Activated naive CD4-positive, alpha-beta T cell treated with anti-CD3 and anti-CD28 coated beads for 36 hours (primary cell): ENCODE measurements at regions of chr1 and their contacts with region 1.

Region 1: DNA sequence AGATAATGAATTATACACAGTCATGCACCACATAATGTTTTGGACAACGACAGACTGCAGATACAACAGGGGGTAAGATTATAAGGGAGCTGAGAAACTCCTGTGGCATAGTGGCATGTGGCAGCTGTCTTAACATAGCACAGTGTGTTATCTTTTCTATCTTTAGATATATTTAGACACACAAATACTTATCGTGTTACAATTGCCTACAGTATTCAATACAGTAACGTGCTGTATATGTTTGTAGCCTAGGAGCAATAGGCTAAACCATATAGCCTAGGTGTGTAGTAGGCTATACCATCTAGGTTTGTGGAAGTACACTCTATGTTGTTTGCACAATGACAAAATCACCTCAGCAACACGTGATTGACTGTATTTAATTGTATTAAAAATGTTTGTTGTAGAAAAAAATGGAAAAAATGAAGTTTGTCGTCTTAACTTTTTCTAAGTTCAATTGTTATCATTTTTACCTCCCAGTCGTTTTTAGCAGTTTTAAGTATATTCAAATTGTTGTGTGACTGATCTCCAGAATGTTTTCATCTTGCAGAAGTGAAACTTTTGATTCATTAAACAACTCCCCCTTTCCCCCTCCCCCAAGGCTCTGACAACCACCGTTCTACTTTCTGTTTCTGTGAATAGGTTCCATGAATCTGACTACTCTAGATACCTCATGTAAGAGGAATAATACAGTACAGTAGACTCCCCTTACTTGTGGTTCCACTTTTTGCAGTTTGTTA is 351.0 kb upstream of the B3GALT2 start:
- DNase-seq: peak; percentile 91
- H3K4me3 Mint-ChIP-seq: no peak overlapping the region
- H3K27ac Mint-ChIP-seq: peak overlapping the region; percentile 26
- H3K4me1 Mint-ChIP-seq: peaks cover 43% of the 10 kb centered on the region
- H3K27me3 Mint-ChIP-seq: no peaks in the 10 kb centered on the region

Region 2: GRCh38 chr1:192639607-192640368 is 897.6 kb before region 1 on chr1:
- CTCF ChIA-PET with region 1: no interaction called
- intact Hi-C with region 1: loop called (anchors 1 kb)
- DNase-seq: peak; percentile 12
- H3K4me3 Mint-ChIP-seq: no peak overlapping the region
- H3K27ac Mint-ChIP-seq: no peak overlapping the region
- H3K4me1 Mint-ChIP-seq: peaks cover 18% of the 10 kb centered on the region
- H3K27me3 Mint-ChIP-seq: peaks cover 7% of the 10 kb centered on the region

Region 3: GRCh38 chr1:193406901-193407300 is 130.5 kb before region 1 on chr1:
- CTCF ChIA-PET with region 1: no interaction called
- intact Hi-C with region 1: loop called (anchors 1 kb)
- DNase-seq: no peak
- H3K4me3 Mint-ChIP-seq: no peak overlapping the region
- H3K27ac Mint-ChIP-seq: no peak overlapping the region
- H3K4me1 Mint-ChIP-seq: peaks cover 26% of the 10 kb centered on the region
- H3K27me3 Mint-ChIP-seq: no peaks in the 10 kb centered on the region

Region 4: GRCh38 chr1:193479187-193479586 is 58.2 kb before region 1 on chr1:
- CTCF ChIA-PET with region 1: no interaction called
- intact Hi-C with region 1: loop called (anchors 2 kb)
- DNase-seq: peak; percentile 83
- H3K4me3 Mint-ChIP-seq: no peak overlapping the region
- H3K27ac Mint-ChIP-seq: peak overlapping the region; percentile 68
- H3K4me1 Mint-ChIP-seq: peaks cover 47% of the 10 kb centered on the region
- H3K27me3 Mint-ChIP-seq: no peaks in the 10 kb centered on the region

Region 5: DNA sequence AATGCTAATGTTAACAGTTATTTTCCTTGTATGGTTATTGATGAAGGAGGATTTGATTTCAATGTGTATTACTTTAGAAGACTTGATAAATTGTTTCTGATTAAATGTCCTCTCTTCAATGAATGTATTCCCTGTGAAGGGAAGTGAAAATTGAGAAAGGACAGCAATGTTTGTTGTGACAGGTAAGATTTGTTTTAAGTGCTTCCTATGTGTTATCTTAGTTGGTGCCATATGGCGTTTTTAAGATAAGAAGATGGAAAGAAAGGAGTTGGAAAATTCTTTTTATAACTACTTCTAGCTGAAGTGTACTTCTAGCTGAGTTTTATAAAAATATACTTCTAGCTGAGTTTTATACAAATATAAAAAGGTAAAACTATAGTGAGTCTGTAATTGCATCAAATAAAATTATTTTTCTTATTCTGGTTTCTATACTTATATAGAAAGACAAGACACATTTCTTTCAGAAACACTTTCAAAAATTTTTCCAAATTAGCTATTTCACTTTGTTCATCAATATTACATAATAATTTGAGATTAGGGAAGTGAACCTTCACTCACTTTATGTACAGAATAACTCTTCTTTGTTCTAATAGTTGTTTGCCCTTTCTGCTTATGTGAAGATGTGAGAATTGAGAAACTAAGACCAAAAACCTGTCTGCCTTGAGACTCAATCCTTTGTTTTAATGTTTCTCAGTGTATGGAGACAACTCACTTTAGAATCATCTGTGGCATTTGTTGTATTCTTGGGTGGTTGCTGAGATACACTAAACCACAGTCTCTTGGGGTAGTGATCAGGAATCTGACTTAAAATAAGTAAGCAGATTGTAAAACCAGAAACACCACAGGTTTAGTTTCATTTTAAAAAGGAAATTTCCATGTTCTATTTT is 31.9 kb after region 1 on chr1:
- CTCF ChIA-PET with region 1: no interaction called
- intact Hi-C with region 1: loop called (anchors 1 kb)
- DNase-seq: peak; percentile 11
- H3K4me3 Mint-ChIP-seq: no peak overlapping the region
- H3K27ac Mint-ChIP-seq: peak overlapping the region; percentile 22
- H3K4me1 Mint-ChIP-seq: peaks cover 26% of the 10 kb centered on the region
- H3K27me3 Mint-ChIP-seq: no peaks in the 10 kb centered on the region

Region 6: GRCh38 chr1:194289569-194290266 is 752.3 kb after region 1 on chr1:
- CTCF ChIA-PET with region 1: no interaction called
- intact Hi-C with region 1: loop called (anchors 1 kb)
- DNase-seq: peak; percentile 81
- H3K4me3 Mint-ChIP-seq: peak overlapping the region; percentile 54
- H3K27ac Mint-ChIP-seq: peak overlapping the region; percentile 59
- H3K4me1 Mint-ChIP-seq: peaks cover 25% of the 10 kb centered on the region
- H3K27me3 Mint-ChIP-seq: no peaks in the 10 kb centered on the region